IMR-90 (cell line): ENCODE measurements at regions of chr2 and their contacts with region 1.

Region 1: GRCh38 chr2:50769406-50770181 is 262.3 kb downstream of the NRXN1 start:
- DNase-seq: no peak
- ATAC-seq: no peak
- H3K4me3 ChIP-seq: no peak overlapping the region
- H3K27ac ChIP-seq: no peak overlapping the region
- H3K4me1 ChIP-seq: no peaks in the 10 kb centered on the region
- H3K27me3 ChIP-seq: no peaks in the 10 kb centered on the region
- CTCF ChIP-seq: no peak
- POLR2A ChIP-seq: no peak
- RAD21 ChIP-seq: no peak

Region 2: DNA sequence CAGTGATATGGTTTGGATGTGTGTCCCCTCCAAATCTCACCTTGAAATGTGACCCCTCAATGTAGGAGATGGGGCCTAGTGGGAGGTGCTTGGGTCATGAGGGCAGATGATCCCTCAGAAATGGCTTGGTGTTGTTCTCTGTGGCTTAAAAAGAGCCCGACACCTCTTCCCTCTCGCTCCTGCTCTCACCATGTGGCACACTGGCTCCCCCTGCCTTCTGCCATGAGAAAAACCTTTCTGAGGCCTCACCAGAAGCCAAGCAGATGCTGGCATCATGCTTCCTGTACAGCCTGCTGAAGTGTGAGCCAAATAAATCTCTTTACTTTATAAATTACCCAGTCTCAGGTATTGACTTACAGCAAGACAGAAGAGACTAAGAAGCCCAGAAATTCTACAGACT is 94.7 kb before region 1 on chr2:
- CTCF ChIA-PET with region 1: no interaction called
- POLR2A ChIA-PET with region 1: no interaction called
- dilution Hi-C with region 1: no loop called
- in situ Hi-C with region 1: no loop called
- intact Hi-C with region 1: no loop called
- DNase-seq: no peak
- ATAC-seq: no peak
- H3K4me3 ChIP-seq: no peak overlapping the region
- H3K27ac ChIP-seq: no peak overlapping the region
- H3K4me1 ChIP-seq: no peaks in the 10 kb centered on the region
- H3K27me3 ChIP-seq: no peaks in the 10 kb centered on the region
- CTCF ChIP-seq: no peak
- POLR2A ChIP-seq: no peak
- RAD21 ChIP-seq: no peak

Region 3: DNA sequence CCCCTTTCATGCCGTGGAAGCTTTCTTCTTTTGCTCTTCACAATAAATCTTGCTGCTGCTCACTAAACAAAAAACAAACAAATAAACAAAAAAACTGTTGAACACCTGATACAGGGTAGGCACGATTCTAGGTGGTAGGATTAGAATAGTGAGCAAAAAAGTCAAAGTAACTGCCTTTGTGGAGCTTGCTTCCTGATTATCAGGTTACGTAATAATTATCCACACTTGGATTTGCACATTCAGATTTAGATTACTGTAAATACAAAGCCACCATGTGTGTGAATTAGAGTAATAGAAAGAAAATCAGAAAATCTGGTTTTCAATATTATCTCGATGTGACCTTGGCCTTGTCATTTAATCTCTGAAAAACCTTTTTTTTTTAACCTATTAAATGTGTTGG is 44.8 kb before region 1 on chr2:
- CTCF ChIA-PET with region 1: no interaction called
- POLR2A ChIA-PET with region 1: no interaction called
- dilution Hi-C with region 1: no loop called
- in situ Hi-C with region 1: no loop called
- intact Hi-C with region 1: loop called (anchors 1 kb)
- DNase-seq: no peak
- ATAC-seq: no peak
- H3K4me3 ChIP-seq: no peak overlapping the region
- H3K27ac ChIP-seq: no peak overlapping the region
- H3K4me1 ChIP-seq: no peaks in the 10 kb centered on the region; the same call in 1 of the 2 replicates
- H3K27me3 ChIP-seq: no peaks in the 10 kb centered on the region
- CTCF ChIP-seq: no peak
- POLR2A ChIP-seq: no peak
- RAD21 ChIP-seq: no peak